H1 (cell line): ENCODE measurements at regions of chr5 and their contacts with region 1.

Region 1: DNA sequence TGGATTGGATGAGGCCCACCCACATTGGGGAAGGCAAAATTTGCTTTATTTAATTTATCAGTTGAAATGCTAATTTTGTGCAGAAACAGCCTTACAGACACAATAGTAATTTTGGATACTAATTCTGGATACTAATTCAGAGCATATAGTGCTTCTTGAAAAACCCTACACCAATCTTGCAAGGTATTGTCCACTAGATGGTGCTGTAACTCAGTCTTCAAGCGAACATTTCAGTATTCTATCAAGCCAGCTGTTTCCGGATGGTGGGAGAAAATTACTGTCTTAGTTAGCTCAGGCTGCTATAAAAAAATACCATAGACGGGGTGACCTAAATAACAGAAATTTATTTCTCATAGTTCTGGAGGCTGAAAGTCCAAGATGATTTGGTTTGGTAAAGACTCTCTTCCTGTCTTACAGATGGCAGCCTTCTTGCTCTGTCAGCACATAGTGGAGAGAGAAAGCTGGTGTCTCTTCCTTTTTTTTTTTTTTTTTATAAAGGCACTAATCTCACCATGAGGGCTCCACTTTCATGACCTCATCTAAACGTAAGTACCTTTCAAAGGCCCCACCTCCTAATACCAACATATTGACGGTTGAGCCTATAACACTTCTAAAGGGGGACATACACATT is 1306.5 kb upstream of the CDH9 start:
- DNase-seq: peak in 1 of 2 experiments; percentile 2
- H3K4me3 ChIP-seq: no peak overlapping the region
- H3K27ac ChIP-seq: no peak overlapping the region
- H3K4me1 ChIP-seq: no peaks in the 10 kb centered on the region
- H3K27me3 ChIP-seq: no peaks in the 10 kb centered on the region
- CTCF ChIP-seq: peak in 2 of 3 experiments; percentile 55 to 70; a peak in 2 of 4 replicates
- EP300 ChIP-seq: no peak
- POLR2A ChIP-seq: no peak
- RAD21 ChIP-seq: peak; percentile 85 to 86

Region 2: GRCh38 chr5:28313321-28313925 is 31.5 kb before region 1 on chr5:
- CTCF ChIA-PET with region 1: no interaction called
- POLR2A ChIA-PET with region 1: no interaction called
- DNase-seq: no peak
- H3K4me3 ChIP-seq: no peak overlapping the region
- H3K27ac ChIP-seq: no peak overlapping the region
- H3K4me1 ChIP-seq: no peaks in the 10 kb centered on the region
- H3K27me3 ChIP-seq: no peaks in the 10 kb centered on the region
- CTCF ChIP-seq: no peak
- EP300 ChIP-seq: no peak
- POLR2A ChIP-seq: no peak
- RAD21 ChIP-seq: no peak

Region 3: DNA sequence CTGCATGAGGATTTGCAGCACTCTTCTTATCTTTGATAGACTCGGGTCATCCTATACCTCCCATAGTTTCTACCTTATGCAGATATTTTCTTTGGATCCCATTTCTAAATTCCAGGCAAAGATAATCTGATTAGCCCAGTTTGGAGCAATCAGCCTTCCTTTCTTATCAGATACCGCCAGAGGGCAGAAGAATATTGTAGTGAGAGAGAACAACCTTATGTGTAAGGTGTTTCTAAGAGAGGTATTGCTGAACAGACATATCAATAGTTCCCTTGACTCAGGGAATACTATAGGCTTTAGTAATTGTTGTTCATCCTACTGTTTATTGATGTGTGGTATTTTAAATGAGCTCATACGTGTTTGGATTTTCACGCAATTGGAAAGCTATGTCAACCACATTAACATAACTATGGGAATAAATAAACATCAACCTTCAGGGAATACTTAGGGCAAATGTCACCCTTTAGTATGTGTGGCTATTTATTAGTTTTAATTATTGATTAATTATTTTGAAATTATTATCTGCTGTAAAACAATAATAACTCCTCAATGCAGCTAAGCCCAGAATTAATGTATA is 128.7 kb after region 1 on chr5:
- CTCF ChIA-PET with region 1: interaction called, 12 read pairs
- POLR2A ChIA-PET with region 1: no interaction called
- DNase-seq: no peak
- H3K4me3 ChIP-seq: no peak overlapping the region
- H3K27ac ChIP-seq: no peak overlapping the region
- H3K4me1 ChIP-seq: no peaks in the 10 kb centered on the region
- H3K27me3 ChIP-seq: no peaks in the 10 kb centered on the region
- CTCF ChIP-seq: peak in 2 of 3 experiments; percentile 40 to 44; a peak in 2 of 4 replicates
- EP300 ChIP-seq: no peak
- POLR2A ChIP-seq: no peak
- RAD21 ChIP-seq: peak; percentile 73 to 75

Region 4: DNA sequence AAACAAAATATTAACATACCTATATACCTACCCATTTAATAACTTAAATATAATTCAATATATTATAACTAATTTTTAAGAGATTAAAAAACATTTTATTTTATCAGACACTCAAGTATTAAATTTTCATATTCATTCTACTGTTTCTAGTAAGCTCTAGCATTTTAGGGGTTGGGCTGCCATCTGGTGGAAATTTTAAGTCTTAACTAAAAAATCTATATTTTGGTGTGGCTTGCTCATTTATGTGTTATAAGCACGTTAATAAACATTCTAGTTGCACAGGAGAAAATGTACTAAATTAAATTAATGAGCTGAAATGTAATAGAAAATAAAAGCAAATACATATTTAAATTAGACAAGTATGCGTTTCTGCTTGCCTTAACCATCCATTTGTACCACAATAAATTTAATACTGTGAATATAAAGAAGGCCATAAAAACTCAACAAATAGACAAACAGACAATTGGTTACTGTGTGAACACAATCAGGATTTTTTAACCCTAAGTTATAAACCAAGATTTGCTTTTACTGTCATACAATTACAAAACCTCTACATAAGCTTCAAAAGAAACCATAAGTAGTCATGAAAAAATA is 421.7 kb after region 1 on chr5:
- CTCF ChIA-PET with region 1: interaction called, 20 read pairs
- POLR2A ChIA-PET with region 1: no interaction called
- DNase-seq: no peak
- H3K4me3 ChIP-seq: no peak overlapping the region
- H3K27ac ChIP-seq: no peak overlapping the region
- H3K4me1 ChIP-seq: no peaks in the 10 kb centered on the region
- H3K27me3 ChIP-seq: no peaks in the 10 kb centered on the region
- CTCF ChIP-seq: peak in 2 of 3 experiments; percentile 12 to 31; a peak in 2 of 4 replicates
- EP300 ChIP-seq: no peak
- POLR2A ChIP-seq: no peak
- RAD21 ChIP-seq: peak; percentile 63 to 73